Activated CD4-positive, alpha-beta T cell treated with anti-CD3 and anti-CD28 coated beads for 36 hours (primary cell): ENCODE measurements at regions of chr2 and their contacts with region 1.

Region 1: DNA sequence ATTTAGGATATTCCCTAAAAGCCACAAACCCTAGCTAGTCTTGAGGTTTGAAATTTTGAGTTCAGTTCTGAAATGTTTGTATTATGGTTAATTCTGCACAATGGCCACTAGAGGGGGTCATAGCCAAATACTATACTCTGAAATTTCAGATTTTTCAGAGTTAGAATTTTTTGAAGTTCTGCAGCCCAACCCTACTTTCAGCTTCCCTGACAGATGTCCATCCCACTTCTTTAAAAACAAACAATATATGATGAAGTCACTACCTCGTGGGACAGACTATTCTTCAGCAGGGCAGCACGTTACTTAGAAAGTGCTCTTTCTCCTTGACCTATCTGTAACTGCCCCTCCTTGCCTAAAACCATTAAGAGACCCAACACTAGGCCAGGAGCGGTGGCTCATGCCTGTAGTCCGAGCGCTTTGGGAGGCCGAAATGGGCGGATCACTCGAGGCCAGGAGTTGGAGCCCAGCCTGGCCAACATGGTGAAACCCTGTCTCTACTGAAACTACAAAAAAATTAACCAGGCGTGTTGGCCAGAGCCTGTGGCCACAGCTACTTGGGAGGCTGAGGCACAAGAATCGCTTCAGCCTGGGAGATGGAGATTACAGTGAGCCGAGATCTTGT is 48.2 kb upstream of the PAPOLG start:
- DNase-seq: no peak
- ATAC-seq: no peak
- H3K4me3 Mint-ChIP-seq: no peak overlapping the region
- H3K27ac Mint-ChIP-seq: no peak overlapping the region
- H3K4me1 Mint-ChIP-seq: no peaks in the 10 kb centered on the region
- H3K27me3 Mint-ChIP-seq: no peaks in the 10 kb centered on the region

Region 2: GRCh38 chr2:60383401-60384143 is 324.3 kb before region 1 on chr2:
- CTCF ChIA-PET with region 1: no interaction called
- POLR2A ChIA-PET with region 1: no interaction called
- intact Hi-C with region 1: no loop called
- DNase-seq: no peak
- ATAC-seq: no peak
- H3K4me3 Mint-ChIP-seq: no peak overlapping the region
- H3K27ac Mint-ChIP-seq: no peak overlapping the region
- H3K4me1 Mint-ChIP-seq: no peaks in the 10 kb centered on the region
- H3K27me3 Mint-ChIP-seq: no peaks in the 10 kb centered on the region

Region 3: DNA sequence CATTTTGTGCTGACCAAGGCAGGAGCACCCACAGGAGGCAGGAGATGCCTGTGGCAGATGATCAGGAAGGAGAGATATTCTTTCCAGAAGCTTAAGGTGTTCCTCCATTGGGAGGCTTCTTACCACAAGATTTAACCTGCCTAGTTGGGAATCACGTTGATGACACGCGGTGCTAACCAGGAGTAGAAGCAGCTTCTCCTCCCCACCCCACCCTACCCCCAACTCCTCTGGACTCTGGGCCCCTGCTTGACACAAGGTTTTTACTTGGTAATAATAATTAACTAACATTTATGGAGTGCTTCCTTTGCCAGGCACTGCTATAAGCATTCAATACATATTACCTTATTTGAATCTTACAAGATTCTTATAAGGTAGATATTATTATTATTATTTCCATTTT is 14.3 kb before region 1 on chr2:
- CTCF ChIA-PET with region 1: interaction called, 10 read pairs
- POLR2A ChIA-PET with region 1: no interaction called
- intact Hi-C with region 1: no loop called
- DNase-seq: no peak
- ATAC-seq: no peak
- H3K4me3 Mint-ChIP-seq: no peak overlapping the region
- H3K27ac Mint-ChIP-seq: no peak overlapping the region
- H3K4me1 Mint-ChIP-seq: no peaks in the 10 kb centered on the region
- H3K27me3 Mint-ChIP-seq: no peaks in the 10 kb centered on the region

Region 4: GRCh38 chr2:60756191-60757041 is 48.6 kb after region 1 on chr2 and contains the start of gene PAPOLG:
- CTCF ChIA-PET with region 1: interaction called, 5 read pairs
- POLR2A ChIA-PET with region 1: no interaction called
- intact Hi-C with region 1: loop called (anchors 1 to 5 kb)
- DNase-seq: peak; percentile 99
- ATAC-seq: peak; percentile 98
- H3K4me3 Mint-ChIP-seq: peak within 1 kb of the TSS; percentile 99
- H3K27ac Mint-ChIP-seq: peak within 1 kb of the TSS; percentile 100
- H3K4me1 Mint-ChIP-seq: peaks cover 34% of the 10 kb centered on the region
- H3K27me3 Mint-ChIP-seq: no peaks in the 10 kb centered on the region
- total RNA-seq, gene PAPOLG: 13.8 to 14.2 TPM

Region 5: DNA sequence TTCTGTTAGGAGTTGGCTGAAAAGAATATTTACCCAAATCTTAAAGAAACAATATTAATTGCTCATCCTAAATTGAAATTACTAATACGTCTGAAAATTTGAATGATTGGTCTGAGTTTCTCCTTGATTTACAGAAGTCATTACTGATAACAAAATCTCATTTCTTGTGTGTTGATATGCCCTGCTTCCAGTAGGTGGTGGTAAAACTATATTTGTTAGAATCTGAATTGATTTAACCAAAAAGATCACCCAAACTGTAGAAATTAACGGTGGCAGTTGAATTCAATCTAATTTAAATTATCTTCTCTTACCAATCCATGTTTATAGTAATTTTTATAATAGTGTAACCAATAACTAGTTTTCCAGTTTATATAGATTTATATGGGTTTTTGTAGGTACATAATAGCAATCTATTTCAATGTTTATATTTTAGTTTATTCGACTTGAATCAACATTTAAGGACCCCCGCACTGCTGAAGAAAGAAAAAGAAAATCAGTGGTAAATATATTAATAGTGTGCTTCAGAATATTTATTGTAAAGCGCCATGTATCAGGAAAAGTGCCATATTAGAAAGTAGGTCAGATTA is 86.5 kb after region 1 on chr2:
- CTCF ChIA-PET with region 1: no interaction called
- POLR2A ChIA-PET with region 1: no interaction called
- intact Hi-C with region 1: loop called (anchors 5 kb)
- DNase-seq: no peak
- ATAC-seq: peak; percentile 51
- H3K4me3 Mint-ChIP-seq: no peak overlapping the region
- H3K27ac Mint-ChIP-seq: no peak overlapping the region
- H3K4me1 Mint-ChIP-seq: peaks cover 17% of the 10 kb centered on the region
- H3K27me3 Mint-ChIP-seq: no peaks in the 10 kb centered on the region

Region 6: GRCh38 chr2:60998628-60999545 is 291.0 kb after region 1 on chr2:
- CTCF ChIA-PET with region 1: interaction called, 115 read pairs
- POLR2A ChIA-PET with region 1: interaction called, 3 read pairs
- intact Hi-C with region 1: loop called (anchors 1 kb)
- DNase-seq: no peak
- ATAC-seq: peak; percentile 77
- H3K4me3 Mint-ChIP-seq: no peak overlapping the region
- H3K27ac Mint-ChIP-seq: no peak overlapping the region
- H3K4me1 Mint-ChIP-seq: no peaks in the 10 kb centered on the region
- H3K27me3 Mint-ChIP-seq: no peaks in the 10 kb centered on the region

Region 7: DNA sequence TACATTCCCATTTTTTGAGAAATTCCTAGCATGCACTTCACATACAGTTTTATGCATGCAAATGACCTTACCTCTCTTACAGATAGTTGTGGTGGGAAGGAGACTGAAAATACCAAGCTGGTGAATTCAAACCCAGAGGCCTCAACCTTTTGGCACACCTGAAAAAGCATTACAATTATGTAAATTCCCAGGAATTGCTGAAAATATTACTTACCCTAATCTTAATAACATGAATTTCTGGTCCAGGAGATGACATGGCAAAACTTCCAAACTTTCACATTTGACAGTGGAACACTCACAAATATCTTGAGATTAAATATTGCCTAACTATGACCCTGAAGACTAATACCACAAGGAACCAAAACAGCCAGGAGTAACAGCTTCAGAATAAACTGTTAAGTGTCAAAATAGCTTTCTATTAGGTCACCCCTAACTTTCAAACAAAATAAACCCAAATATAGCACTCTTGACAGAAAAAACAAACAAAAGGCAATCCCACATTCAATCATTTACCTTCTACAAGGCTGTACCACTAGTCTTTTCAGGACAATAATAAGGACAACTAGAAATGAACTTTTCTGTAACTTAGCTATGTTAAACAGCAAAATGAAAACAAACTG is 298.7 kb after region 1 on chr2:
- CTCF ChIA-PET with region 1: interaction called, 115 read pairs
- POLR2A ChIA-PET with region 1: no interaction called
- intact Hi-C with region 1: no loop called
- DNase-seq: no peak
- ATAC-seq: no peak
- H3K4me3 Mint-ChIP-seq: no peak overlapping the region
- H3K27ac Mint-ChIP-seq: no peak overlapping the region
- H3K4me1 Mint-ChIP-seq: peaks cover under 1% of the 10 kb centered on the region
- H3K27me3 Mint-ChIP-seq: no peaks in the 10 kb centered on the region